ENCODE measurements at regions of chr2 and their contacts with region 1.

Region 1: GRCh38 chr2:86704459-86704971 is 15.6 kb upstream of the RMND5A start:
- ATAC-seq: peak; percentile 55 to 92 (median 88)
- H3K4me3 ChIP-seq: peak overlapping the region in 1 of 5 donors; percentile 23
- H3K27ac ChIP-seq: peak overlapping the region in 1 of 2 donors; percentile 1
- H3K4me1 ChIP-seq: peaks cover 12 to 14% of the 10 kb centered on the region in 2 donors

Region 2: DNA sequence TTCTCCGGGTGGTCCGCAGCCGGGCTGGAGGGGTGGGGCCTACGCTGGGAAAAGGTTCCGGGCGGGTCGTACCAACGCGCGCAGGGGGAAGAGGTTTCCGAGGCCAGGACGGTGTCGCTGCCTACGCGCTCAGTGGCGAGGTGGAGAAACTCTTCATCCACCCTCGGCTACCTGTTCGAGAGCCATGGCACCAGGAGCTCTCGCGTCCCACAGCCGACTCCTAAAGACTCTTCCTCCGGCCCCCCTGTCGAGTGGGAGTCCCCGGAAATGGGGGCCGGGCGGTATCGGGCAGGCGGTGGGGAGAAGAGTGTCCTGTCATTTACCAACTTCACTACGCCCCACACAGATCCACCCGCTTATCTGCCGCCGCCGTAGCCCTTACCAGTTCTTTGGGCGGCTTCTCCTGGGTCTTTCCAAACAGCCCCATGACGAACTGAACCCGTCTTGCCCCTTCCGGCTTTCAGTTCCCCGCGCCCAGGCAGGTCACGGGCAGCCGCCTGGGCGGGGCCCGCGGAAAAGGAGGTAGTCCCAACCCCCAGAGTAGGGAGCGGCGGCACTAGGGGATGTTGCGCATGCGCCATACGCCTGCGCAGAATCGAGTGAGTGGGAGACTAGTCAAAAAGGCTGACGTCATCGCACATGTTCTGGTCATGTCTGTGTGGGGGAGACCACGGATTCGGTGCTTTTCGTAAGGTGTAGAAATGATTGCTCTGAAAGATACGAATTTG is 141.4 kb before region 1 on chr2 and contains the start of gene CHMP3:
- in situ Hi-C with region 1: loop called in 1 of 9 experiments (anchors 25 kb)
- ATAC-seq: peak; percentile 88 to 95 (median 91)
- H3K4me3 ChIP-seq: peak within 1 kb of the TSS; percentile 62 to 89 (median 80)
- H3K27ac ChIP-seq: peak within 1 kb of the TSS; percentile 99 to 100
- H3K4me1 ChIP-seq: peaks cover 7 to 11% of the 10 kb centered on the region in 2 donors
- total RNA-seq, gene CHMP3: 26.9 to 68.2 (median 49.6) TPM

Measured in motor neuron (in vitro differentiated cells).